OCI-LY7 (cell line): ENCODE measurements at regions of chr2 and their contacts with region 1.

Region 1: DNA sequence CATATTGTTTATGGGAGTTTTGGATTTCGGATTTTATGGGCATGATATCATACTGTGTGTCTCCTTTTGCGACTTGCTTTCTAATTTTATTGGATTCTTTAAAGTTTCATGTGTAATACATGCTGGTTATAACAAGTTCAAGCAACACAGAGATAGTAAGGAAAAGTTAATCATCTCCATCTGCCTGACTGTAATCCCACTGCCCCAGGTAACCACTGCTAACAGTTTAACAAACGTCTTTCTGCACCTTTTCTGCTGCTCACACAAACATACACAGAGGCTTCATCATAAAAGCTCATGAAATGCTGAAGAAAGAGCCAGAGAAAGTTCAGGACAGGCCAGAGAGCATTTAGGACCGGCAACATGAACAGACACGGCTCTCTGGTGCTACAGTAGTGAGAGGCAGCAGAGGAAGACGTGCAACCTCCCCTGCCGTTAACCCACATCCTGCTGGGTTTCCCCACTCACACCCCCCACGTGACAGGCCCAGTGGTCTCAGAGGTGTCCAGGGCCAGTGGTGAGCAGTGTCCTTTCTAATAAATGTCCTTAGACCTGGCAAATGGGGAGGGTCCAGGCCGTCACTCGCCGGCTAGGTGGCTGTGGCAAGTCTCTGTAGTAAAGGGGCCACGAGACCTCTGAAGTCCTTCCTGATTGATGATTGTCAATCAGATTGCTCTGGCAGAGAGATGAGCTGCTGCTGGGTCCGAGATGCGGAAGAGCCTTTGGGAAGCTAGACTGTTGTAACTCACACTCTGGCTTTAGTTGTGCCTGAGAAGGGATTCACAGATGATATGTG is 43.0 kb upstream of the SLC1A4 start:
- DNase-seq: peak; percentile 89
- H3K4me3 ChIP-seq: peak overlapping the region; percentile 37
- H3K27ac ChIP-seq: peak overlapping the region; percentile 84
- H3K4me1 ChIP-seq: peaks cover 53% of the 10 kb centered on the region
- CTCF ChIP-seq: no peak

Region 2: GRCh38 chr2:64711252-64711800 is 234.8 kb before region 1 on chr2:
- CTCF ChIA-PET with region 1: no interaction called
- POLR2A ChIA-PET with region 1: no interaction called
- intact Hi-C with region 1: no loop called
- DNase-seq: no peak
- H3K4me3 ChIP-seq: no peak overlapping the region
- H3K27ac ChIP-seq: no peak overlapping the region
- H3K4me1 ChIP-seq: peaks cover 6% of the 10 kb centered on the region
- CTCF ChIP-seq: no peak

Region 3: DNA sequence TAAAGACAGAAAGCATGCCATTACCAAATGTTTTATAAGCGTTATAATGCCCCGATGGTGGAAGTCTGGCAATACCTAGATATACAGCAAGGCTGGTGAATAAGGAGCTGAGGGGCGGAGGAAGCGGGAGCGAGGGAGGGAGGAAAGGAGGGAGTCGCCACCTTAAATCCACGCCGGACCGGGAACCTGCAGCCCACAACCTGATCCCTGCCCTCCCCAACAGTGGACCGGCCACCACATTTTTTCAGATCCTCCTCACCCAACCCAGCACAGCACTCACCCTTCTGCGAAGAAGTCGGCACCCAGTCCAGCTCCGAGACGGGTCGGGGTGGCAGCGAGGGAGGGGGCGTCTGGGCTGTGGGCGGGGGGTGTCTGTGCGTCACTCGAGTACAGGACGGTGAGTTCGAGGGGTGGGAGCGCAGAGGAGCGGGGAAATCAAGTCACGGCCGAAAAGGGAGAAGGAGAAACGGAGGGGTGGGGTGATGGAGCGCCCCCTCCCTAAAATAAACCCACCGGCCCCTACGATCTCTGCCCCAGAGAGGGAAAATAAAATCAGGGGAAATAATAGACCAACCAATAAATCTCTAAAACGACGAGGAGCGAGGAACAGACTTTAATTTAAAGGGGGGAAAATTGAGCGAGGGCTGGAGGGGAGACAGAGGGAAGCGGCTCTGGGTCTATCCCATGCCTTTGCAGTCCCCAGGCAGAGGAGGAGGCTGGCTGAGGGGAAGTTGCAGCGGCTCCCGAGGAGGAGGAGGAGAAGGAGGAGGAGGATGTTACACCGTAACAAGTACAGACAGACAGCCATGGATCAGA is 196.0 kb before region 1 on chr2:
- CTCF ChIA-PET with region 1: no interaction called
- POLR2A ChIA-PET with region 1: no interaction called
- intact Hi-C with region 1: no loop called
- DNase-seq: peak; percentile 63
- H3K4me3 ChIP-seq: peak overlapping the region; percentile 85
- H3K27ac ChIP-seq: peak overlapping the region; percentile 92
- H3K4me1 ChIP-seq: peaks cover 50% of the 10 kb centered on the region
- CTCF ChIP-seq: peak; percentile 43

Region 4: DNA sequence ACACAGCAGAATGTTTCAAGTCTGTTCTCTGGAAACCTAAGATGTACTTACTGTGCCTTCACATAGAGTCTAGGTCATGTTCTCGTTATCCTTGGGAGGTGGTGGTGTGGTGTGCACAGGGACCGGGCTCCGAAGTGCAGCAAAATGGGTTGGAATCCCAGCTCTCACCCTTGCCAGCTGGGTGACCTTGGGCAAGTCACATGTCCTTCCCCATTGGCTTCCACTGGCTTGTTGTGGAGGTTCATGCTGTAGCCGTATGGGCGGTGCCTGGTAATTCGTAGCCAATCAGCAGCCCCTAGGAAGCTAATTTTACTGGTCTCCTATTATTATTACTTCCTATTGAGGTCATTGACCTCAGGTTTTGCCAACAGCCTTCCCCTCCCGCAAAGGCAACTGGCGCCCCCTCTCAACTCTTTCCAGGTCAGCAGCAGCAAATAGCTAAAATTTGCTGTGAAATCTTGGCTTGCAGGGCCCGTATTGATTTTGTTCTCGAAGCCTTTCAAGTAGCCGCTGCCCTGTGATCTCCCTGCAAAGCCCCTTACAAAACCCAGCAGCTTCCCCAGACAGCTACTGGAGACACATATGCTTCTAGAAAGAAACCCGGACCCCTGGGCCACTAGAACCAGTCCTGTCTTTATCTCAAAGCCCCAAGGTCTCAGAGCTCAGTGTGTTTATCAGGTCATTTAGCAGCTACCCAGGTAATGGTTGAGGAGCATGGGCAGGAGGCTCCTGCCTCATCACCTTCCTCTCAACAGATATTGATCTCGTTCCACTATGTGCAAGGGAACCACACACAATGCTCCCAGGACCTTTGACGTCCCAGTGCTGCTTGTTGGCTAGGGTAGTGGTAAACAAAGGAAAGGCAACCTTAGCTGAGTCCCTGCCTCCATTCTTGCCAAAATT is 23.4 kb before region 1 on chr2:
- CTCF ChIA-PET with region 1: no interaction called
- POLR2A ChIA-PET with region 1: interaction called, 23 read pairs
- intact Hi-C with region 1: no loop called
- DNase-seq: peak; percentile 53
- H3K4me3 ChIP-seq: peak overlapping the region; percentile 38
- H3K27ac ChIP-seq: peak overlapping the region; percentile 59
- H3K4me1 ChIP-seq: peaks cover 37% of the 10 kb centered on the region
- CTCF ChIP-seq: peak; percentile 72

Region 5: DNA sequence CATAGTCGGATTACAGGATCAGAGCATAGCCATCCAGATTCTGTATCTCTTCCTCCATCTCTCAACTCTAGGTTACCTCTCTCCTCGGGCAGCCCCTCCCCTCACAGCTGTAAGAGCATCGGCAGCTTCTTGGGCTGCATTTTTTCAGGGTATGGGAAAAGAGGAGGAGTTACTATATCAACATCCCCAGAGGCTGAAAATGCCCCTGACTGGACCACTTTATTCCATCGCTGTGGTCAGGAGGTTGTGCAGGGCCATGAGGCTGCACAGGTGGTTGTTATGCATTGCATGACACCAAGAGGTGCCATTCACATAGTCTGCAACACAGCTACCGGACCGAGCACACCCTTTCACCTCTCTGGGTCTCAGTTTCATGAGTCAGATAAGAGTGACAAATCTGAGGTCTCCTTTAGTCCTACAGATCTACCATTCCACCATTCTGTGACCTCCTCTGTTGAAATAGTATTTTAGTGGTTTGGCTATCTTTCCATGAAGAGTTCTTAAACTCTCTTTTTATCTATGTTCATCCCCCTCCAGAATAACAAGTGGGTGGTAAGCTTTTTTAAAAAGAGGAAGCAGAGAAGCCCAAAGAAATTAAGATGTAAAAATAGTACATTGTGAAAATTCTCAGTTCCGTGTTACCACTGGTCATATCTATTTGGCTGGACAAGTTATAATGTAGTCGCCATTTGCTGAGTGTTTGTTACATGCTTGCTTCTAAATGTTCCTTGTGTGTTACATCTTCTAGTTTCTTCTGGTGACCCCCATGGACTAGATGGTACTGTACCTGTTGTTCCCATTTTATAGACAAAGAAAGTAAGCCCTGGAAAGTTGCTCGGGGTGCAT is 13.6 kb before region 1 on chr2:
- CTCF ChIA-PET with region 1: interaction called, 8 read pairs
- POLR2A ChIA-PET with region 1: interaction called, 33 read pairs
- intact Hi-C with region 1: no loop called
- DNase-seq: peak; percentile 81
- H3K4me3 ChIP-seq: peak overlapping the region; percentile 77
- H3K27ac ChIP-seq: peak overlapping the region; percentile 88
- H3K4me1 ChIP-seq: peaks cover 71% of the 10 kb centered on the region
- CTCF ChIP-seq: no peak; the same call in 1 of the 2 replicates

Region 6: GRCh38 chr2:64988420-64989125 is 42.4 kb after region 1 on chr2:
- CTCF ChIA-PET with region 1: no interaction called
- POLR2A ChIA-PET with region 1: interaction called, 5 read pairs
- intact Hi-C with region 1: loop called (anchors 2 kb)
- DNase-seq: peak; percentile 66
- H3K4me3 ChIP-seq: peak overlapping the region; percentile 82
- H3K27ac ChIP-seq: peak overlapping the region; percentile 25
- H3K4me1 ChIP-seq: peaks cover 47% of the 10 kb centered on the region
- CTCF ChIP-seq: peak; percentile 62